Activated T-helper 2 cell treated with anti-CD3 and anti-CD28 coated beads, Interferon-gamma antibody, Interleukin-2, Interleukin-4, amounts not matched to agents 10 μg/mL and 5 μg/mL and 100 μg/mL, durations not matched to agents 14 hours and 24 hours and 36 hours (primary cell): ENCODE measurements at regions of chr9 and their contacts with region 1.

Region 1: GRCh38 chr9:71604197-71605063 is 163.9 kb downstream of the CEMIP2 start:
- DNase-seq: peak; percentile 57
- H3K4me3 Mint-ChIP-seq: no peak overlapping the region
- H3K27ac Mint-ChIP-seq: no peak overlapping the region
- H3K4me1 Mint-ChIP-seq: no peaks in the 10 kb centered on the region
- H3K27me3 Mint-ChIP-seq: peaks cover 4% of the 10 kb centered on the region

Region 2: GRCh38 chr9:71624728-71625127 is 20.3 kb after region 1 on chr9:
- intact Hi-C with region 1: no loop called
- DNase-seq: no peak
- H3K4me3 Mint-ChIP-seq: no peak overlapping the region
- H3K27ac Mint-ChIP-seq: no peak overlapping the region
- H3K4me1 Mint-ChIP-seq: no peaks in the 10 kb centered on the region
- H3K27me3 Mint-ChIP-seq: peaks cover 14% of the 10 kb centered on the region

Region 3: DNA sequence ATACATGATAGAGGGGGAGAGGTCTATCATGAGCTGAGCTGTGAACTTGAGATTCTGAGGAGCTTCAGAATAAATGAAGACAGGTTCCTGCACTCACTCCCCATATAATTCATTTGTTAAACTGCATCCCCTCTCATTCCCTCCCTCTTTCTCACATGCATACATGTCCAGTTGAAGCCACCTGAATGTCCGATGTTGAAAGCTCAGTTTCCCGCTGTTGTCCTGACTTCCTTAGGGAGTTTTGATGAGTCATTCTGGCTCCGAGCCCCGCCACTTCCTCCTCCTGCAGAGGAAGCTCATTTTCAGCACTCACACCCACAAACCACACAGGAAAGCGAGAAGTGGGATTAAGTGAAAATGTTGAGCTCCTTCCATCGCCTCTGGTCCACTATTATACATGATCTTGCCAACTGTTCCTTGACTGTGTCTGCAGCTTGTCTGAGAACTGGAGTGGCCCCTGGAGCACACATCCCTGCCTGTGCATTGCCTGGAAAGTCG is 42.7 kb after region 1 on chr9:
- intact Hi-C with region 1: no loop called
- DNase-seq: no peak
- H3K4me3 Mint-ChIP-seq: no peak overlapping the region
- H3K27ac Mint-ChIP-seq: no peak overlapping the region
- H3K4me1 Mint-ChIP-seq: peaks cover 16% of the 10 kb centered on the region
- H3K27me3 Mint-ChIP-seq: peaks cover 30% of the 10 kb centered on the region

Region 4: DNA sequence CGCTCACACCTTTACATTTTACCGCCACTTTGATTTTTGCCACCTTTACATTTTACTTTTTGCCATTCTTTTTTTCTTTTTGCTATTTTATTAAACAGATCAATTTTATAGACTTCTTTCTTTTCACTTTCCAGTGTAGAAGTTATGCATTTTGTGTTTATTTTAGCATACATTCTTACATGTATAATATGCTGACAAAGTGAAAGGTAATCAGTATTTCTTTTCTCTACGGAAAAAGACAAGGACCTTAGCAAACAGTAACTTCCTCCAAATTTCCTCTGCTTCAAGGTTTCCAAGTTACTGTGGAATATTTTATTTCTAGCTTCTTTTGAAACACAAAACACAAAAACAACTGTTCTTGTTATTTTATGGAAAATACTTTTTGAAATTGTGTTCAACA is 66.9 kb after region 1 on chr9:
- intact Hi-C with region 1: no loop called
- DNase-seq: no peak
- H3K4me3 Mint-ChIP-seq: no peak overlapping the region
- H3K27ac Mint-ChIP-seq: no peak overlapping the region
- H3K4me1 Mint-ChIP-seq: no peaks in the 10 kb centered on the region
- H3K27me3 Mint-ChIP-seq: peaks cover 19% of the 10 kb centered on the region

Region 5: DNA sequence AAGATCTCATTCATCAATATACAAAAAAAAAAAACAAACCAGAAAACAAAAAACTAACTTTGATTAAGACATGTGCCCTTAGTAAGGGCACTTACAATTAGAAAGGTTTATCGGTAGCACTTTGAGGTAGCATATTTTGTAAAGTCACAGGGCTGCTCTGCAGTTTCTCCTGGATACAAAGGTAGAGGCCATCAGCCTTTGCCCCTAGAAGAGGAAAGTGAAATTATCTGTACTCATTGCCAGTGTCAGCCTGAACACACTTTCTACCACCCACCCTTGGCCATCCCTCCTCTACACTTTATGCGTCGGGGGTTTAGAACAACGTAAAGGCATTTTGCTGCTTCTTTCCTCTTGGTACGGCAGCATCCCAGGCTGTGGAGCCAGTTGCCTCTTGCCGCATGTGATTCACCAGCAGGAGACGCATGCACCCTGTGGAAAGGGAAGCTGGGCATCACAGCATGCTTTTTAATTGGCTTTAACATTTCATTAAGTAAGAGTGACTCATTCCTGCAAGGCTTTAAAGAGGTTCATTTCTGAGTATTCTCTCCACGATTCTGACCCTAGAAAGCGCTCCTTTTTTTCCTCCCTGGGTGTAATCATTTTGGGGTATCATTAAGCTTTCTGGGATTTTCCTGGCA is 79.3 kb after region 1 on chr9:
- intact Hi-C with region 1: loop called (anchors 10 kb)
- DNase-seq: no peak
- H3K4me3 Mint-ChIP-seq: no peak overlapping the region
- H3K27ac Mint-ChIP-seq: no peak overlapping the region
- H3K4me1 Mint-ChIP-seq: peaks cover 38% of the 10 kb centered on the region
- H3K27me3 Mint-ChIP-seq: no peaks in the 10 kb centered on the region

Region 6: DNA sequence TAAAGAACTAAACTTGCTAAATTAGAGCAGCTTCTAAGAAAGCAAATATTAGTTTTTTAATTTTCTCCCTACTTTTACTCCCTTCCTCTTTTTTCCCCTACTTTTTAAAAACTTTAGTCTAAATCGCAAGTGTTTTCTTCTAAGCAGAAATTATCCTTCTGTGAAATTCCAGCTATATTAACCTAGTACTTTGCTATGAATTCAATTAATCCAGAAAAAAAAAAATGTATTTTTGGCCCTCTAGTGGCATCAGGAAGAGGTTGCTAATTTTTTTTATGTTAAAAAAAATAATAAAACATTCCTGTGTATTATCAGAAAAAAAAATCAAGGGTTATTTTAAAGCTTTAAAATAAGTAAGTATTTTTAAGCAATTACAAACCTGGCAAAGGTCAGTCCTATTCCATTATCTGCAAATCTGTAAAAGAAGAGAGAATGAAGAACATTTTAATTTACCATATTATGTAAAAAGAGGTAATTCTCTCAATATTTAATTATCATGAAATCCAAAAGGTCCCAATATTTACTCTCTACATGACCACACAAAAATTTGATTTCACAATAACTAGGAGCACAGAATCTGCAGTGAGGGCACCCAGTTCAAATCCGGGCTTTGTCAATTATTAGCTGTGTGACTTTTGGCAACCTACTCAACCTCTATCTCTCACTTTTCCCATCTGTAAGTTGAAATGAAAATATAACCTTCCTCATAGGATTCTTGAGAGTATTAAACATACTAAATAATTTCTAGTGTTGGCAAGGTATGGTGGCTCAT is 111.9 kb after region 1 on chr9:
- intact Hi-C with region 1: loop called (anchors 10 kb)
- DNase-seq: no peak
- H3K4me3 Mint-ChIP-seq: no peak overlapping the region
- H3K27ac Mint-ChIP-seq: no peak overlapping the region
- H3K4me1 Mint-ChIP-seq: peaks cover 3% of the 10 kb centered on the region
- H3K27me3 Mint-ChIP-seq: no peaks in the 10 kb centered on the region

Region 7: DNA sequence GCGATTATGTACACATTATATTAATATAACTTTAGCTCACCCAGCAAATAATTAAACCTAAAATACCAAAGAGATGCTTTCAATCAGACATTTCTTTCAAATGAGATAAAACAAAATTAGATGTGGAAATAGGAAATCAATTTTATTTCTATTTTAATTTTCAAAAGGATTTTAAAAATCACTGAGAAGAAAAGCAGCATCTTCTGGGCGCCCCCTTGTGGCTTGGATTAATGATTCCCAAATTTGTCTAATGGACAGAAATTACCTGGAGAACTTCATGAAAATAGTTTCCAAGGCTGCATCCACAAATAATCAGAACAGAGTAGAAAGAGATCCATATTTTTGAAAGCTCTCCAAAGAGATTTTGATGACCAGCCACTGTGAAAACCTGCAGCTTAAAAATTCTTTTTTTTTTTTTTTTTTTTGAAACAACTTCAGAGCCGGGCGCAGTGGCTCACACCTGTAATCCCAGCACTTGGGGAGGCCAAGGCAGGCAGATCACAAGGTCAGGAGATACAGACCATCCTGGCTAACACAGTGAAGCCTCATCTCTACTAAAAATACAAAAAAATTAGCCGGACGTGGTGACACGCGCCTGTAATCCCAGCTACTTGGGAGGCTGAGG is 214.8 kb after region 1 on chr9:
- intact Hi-C with region 1: loop called (anchors 1 kb)
- DNase-seq: no peak
- H3K4me3 Mint-ChIP-seq: no peak overlapping the region
- H3K27ac Mint-ChIP-seq: no peak overlapping the region
- H3K4me1 Mint-ChIP-seq: peaks cover 29% of the 10 kb centered on the region
- H3K27me3 Mint-ChIP-seq: peaks cover 7% of the 10 kb centered on the region

Region 8: DNA sequence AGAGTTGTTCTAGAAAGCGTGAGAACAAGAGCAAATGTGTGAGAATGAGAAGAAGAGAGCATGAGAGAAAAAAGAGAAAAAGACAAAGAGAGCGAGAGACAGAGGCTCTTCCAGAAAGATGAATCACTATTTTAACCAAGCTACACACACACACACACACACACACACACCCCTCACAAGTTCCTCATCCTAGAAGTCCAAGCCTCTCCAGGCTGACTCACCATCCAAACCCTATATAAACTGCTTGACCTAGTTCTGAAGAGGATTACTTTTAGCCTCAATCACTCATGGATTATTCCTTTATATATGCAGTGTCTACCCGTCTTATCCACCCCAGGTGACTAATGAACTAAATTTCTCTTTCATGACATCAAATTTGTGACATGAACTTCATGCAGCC is 418.4 kb after region 1 on chr9:
- intact Hi-C with region 1: loop called (anchors 10 kb)
- DNase-seq: no peak
- H3K4me3 Mint-ChIP-seq: no peak overlapping the region
- H3K27ac Mint-ChIP-seq: no peak overlapping the region
- H3K4me1 Mint-ChIP-seq: peaks cover 8% of the 10 kb centered on the region
- H3K27me3 Mint-ChIP-seq: peaks cover 5% of the 10 kb centered on the region